Activated naive CD4-positive, alpha-beta T cell treated with anti-CD3 and anti-CD28 coated beads for 36 hours (primary cell): ENCODE measurements at regions of chr18 and their contacts with region 1.

Region 1: DNA sequence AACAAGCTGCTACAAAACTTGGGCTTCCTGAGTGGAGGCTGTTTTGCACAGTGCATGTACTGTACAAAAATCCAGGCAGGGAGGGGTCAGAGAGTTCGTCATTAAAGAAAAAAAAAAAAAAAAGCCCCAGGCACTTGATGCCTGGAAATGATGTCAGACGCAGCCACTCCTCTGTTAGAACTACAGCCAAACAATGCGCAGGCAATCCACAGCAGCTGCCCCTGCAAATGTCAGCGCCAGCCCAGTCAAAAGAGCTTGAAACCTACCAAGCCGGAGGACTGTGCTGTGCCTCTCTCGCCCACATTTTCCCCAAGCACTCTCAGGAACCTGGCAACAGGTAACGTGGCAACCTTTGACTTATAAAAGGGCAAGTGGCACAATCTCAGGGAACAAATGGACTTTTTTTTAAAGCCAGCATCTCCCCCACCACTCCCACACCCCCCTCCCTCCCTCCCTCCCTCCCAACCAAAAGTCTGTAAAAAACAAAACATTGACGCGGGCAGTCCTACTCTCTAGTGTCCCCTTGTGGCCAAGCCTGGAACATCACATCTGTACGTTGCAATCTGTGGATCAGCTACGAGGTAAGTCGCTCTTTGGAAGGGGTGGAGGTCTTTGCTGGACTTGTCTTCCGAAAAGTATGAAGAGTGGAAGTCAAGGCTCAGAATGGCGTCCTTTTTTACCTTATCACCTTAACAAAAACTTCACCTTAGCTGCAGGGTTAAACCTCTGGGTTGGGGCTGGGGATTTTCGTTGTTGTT is 144.1 kb downstream of the TGIF1 start:
- DNase-seq: peak; percentile 95
- H3K4me3 Mint-ChIP-seq: peak overlapping the region; percentile 92
- H3K27ac Mint-ChIP-seq: peak overlapping the region; percentile 100
- H3K4me1 Mint-ChIP-seq: peaks cover 48% of the 10 kb centered on the region
- H3K27me3 Mint-ChIP-seq: no peaks in the 10 kb centered on the region

Region 2: GRCh38 chr18:2857491-2858131 is 736.5 kb before region 1 on chr18:
- CTCF ChIA-PET with region 1: no interaction called
- intact Hi-C with region 1: no loop called
- DNase-seq: no peak
- H3K4me3 Mint-ChIP-seq: no peak overlapping the region
- H3K27ac Mint-ChIP-seq: no peak overlapping the region
- H3K4me1 Mint-ChIP-seq: peaks cover 13% of the 10 kb centered on the region
- H3K27me3 Mint-ChIP-seq: no peaks in the 10 kb centered on the region

Region 3: DNA sequence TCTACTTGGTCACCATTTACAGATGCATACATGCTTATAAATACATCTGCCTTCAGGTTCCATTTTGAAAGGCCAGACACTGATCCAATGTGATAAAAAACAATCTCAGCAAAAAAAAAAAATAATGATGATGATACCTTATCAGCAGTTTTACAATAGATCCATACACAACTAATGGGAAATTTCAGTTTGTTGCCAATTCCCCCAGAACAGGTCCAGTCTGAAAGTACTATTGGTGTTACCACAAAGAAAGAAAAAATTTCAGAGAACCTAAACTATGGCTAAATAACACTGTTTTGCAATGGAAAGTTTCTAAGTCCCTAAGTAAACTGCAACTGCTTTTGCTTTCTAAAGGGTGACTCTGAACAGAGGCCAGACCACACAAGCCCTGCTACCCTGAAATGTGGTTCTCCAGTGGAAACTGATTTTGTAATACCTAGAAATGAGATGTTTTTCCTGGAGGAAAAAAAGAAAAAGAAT is 635.2 kb before region 1 on chr18:
- CTCF ChIA-PET with region 1: no interaction called
- intact Hi-C with region 1: loop called (anchors 2 kb)
- DNase-seq: peak; percentile 44
- H3K4me3 Mint-ChIP-seq: peak overlapping the region; percentile 53
- H3K27ac Mint-ChIP-seq: peak overlapping the region; percentile 100
- H3K4me1 Mint-ChIP-seq: peaks cover 88% of the 10 kb centered on the region
- H3K27me3 Mint-ChIP-seq: no peaks in the 10 kb centered on the region

Region 4: GRCh38 chr18:3297025-3297984 is 296.8 kb before region 1 on chr18:
- CTCF ChIA-PET with region 1: interaction called, 11 read pairs
- intact Hi-C with region 1: loop called (anchors 1 kb)
- DNase-seq: peak; percentile 98
- H3K4me3 Mint-ChIP-seq: peak overlapping the region; percentile 93
- H3K27ac Mint-ChIP-seq: peak overlapping the region; percentile 79
- H3K4me1 Mint-ChIP-seq: peaks cover 3% of the 10 kb centered on the region
- H3K27me3 Mint-ChIP-seq: peaks cover 11% of the 10 kb centered on the region

Region 5: DNA sequence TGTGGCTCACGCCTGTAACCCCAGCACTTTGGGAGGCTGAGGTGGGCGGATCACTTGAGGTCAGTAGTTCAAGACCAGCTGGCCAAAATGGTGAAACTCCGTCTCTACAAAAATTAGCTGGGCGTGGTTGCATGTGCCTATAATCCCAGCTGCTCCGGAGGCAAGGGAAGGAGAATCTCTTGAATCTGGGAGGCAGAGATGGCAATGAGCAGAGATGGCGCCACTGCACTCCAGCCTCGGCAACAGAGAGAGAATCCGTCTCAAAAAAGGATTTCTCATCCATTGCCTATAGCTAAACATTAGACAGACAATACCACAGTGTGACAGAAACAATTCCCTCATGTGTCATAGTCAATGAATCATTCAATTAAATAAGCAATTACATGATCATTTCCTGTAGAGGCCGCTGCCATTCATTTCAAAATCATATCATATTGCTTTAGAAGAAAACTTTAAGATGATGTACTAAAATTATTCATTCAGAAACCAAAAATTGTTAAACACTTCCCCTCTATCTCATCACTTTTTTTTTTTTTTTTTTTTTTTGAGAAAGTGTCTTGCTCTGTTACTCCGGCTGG is 213.6 kb before region 1 on chr18:
- CTCF ChIA-PET with region 1: interaction called, 4 read pairs
- intact Hi-C with region 1: loop called (anchors 1 kb)
- DNase-seq: peak; percentile 37
- H3K4me3 Mint-ChIP-seq: no peak overlapping the region
- H3K27ac Mint-ChIP-seq: no peak overlapping the region
- H3K4me1 Mint-ChIP-seq: peaks cover 7% of the 10 kb centered on the region
- H3K27me3 Mint-ChIP-seq: no peaks in the 10 kb centered on the region

Region 6: GRCh38 chr18:3541549-3542386 is 52.3 kb before region 1 on chr18:
- CTCF ChIA-PET with region 1: interaction called, 5 read pairs
- intact Hi-C with region 1: loop called (anchors 1 kb)
- DNase-seq: peak; percentile 71
- H3K4me3 Mint-ChIP-seq: peak overlapping the region; percentile 0
- H3K27ac Mint-ChIP-seq: peak overlapping the region; percentile 66
- H3K4me1 Mint-ChIP-seq: peaks cover 24% of the 10 kb centered on the region
- H3K27me3 Mint-ChIP-seq: peaks cover 8% of the 10 kb centered on the region

Region 7: GRCh38 chr18:3634250-3634939 is 40.3 kb after region 1 on chr18:
- CTCF ChIA-PET with region 1: interaction called, 5 read pairs
- intact Hi-C with region 1: loop called (anchors 2 kb)
- DNase-seq: no peak
- H3K4me3 Mint-ChIP-seq: no peak overlapping the region
- H3K27ac Mint-ChIP-seq: no peak overlapping the region
- H3K4me1 Mint-ChIP-seq: peaks cover 33% of the 10 kb centered on the region
- H3K27me3 Mint-ChIP-seq: no peaks in the 10 kb centered on the region

Region 8: GRCh38 chr18:3660739-3661515 is 66.8 kb after region 1 on chr18:
- CTCF ChIA-PET with region 1: interaction called, 63 read pairs
- intact Hi-C with region 1: loop called (anchors 1 kb)
- DNase-seq: no peak
- H3K4me3 Mint-ChIP-seq: no peak overlapping the region
- H3K27ac Mint-ChIP-seq: no peak overlapping the region
- H3K4me1 Mint-ChIP-seq: peaks cover 23% of the 10 kb centered on the region
- H3K27me3 Mint-ChIP-seq: no peaks in the 10 kb centered on the region